Natural killer cell (primary cell): ENCODE measurements at regions of chr10 and their contacts with region 1.

Region 1: DNA sequence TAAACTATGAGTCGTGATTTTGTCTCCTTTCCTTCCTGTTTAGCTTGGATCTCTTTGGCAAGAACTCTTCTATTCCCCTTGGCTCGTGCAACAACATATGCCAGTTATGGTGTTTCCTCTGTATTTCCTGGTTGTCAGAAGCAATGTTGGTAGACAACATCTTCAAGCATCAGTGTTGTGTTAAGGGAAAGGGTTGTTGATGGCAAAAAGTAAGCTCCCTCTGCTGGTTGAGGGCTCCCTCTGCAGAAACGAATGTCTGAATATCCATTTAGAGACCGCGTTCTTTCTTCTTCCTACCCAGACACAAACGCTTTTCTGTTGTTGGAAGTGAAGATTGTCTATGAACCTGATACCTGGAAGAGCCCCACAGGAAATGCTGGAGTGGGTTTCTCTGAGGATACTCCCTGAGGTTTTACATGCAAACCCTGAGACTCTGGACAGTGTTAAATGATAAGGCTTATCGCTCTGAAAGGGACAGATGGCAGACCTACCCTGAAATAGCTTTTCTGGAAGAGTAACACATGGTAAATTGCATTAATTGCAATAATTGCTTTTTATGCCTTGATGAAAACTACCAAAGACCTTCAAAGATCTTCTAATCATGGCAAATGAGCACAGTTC is 23.5 kb upstream of the C1QL3 start:
- DNase-seq: peak in 1 of 2 donors; percentile 37
- ATAC-seq: peak in 1 of 3 donors; percentile 54
- H3K4me3 ChIP-seq: no peak overlapping the region
- H3K4me3 Mint-ChIP-seq: no peak overlapping the region
- H3K27ac ChIP-seq: no peak overlapping the region
- H3K27ac Mint-ChIP-seq: no peak overlapping the region
- H3K4me1 ChIP-seq: no peaks in the 10 kb centered on the region
- H3K4me1 Mint-ChIP-seq: peaks cover 0 to 6% of the 10 kb centered on the region in 2 donors
- H3K27me3 ChIP-seq: no peaks in the 10 kb centered on the region
- H3K27me3 Mint-ChIP-seq: peaks cover 12 to 49% of the 10 kb centered on the region in 2 donors
- CTCF ChIP-seq: peak; percentile 22

Region 2: DNA sequence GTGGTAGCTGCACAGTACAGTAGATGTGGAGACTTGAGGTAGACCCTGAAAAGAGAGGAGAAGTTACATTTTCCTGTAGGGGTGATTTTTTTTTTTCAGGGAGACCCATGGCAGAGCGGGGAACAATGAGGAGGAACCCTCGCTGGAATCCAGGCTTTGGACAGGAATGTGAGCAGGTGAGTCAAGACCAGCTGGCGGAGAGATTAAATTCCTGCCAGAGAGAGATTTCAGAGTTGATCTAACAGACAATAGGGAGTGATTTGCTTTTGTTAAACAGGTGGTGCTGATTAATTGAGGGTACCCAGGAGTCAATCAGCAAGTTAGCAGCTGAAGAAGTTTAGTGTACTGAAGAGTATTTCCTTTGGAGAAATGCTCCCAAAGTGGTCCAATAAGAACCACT is 643.3 kb before region 1 on chr10:
- intact Hi-C with region 1: loop called (anchors 1 kb)
- DNase-seq: no peak
- ATAC-seq: no peak
- H3K4me3 ChIP-seq: no peak overlapping the region
- H3K4me3 Mint-ChIP-seq: no peak overlapping the region
- H3K27ac ChIP-seq: no peak overlapping the region
- H3K27ac Mint-ChIP-seq: no peak overlapping the region
- H3K4me1 ChIP-seq: no peaks in the 10 kb centered on the region
- H3K4me1 Mint-ChIP-seq: no peaks in the 10 kb centered on the region
- H3K27me3 ChIP-seq: no peaks in the 10 kb centered on the region
- H3K27me3 Mint-ChIP-seq: peaks cover 13 to 30% of the 10 kb centered on the region in 2 donors
- CTCF ChIP-seq: no peak